WTC11 (cell line): ENCODE measurements at regions of chr6 and their contacts with region 1.

Region 1: GRCh38 chr6:138509371-138509770 is 10.1 kb upstream of the NHSL1 start:
- DNase-seq: peak; percentile 43
- ATAC-seq: peak; percentile 49
- H3K4me3 Mint-ChIP-seq: no peak overlapping the region
- H3K27ac Mint-ChIP-seq: no peak overlapping the region
- H3K4me1 Mint-ChIP-seq: peaks cover 53% of the 10 kb centered on the region
- H3K27me3 Mint-ChIP-seq: no peaks in the 10 kb centered on the region; the same call in 1 of the 2 replicates
- CTCF ChIP-seq: peak; percentile 64

Region 2: GRCh38 chr6:138428944-138429598 is 80.3 kb before region 1 on chr6:
- CTCF ChIA-PET with region 1: interaction called, 29 read pairs
- POLR2A ChIA-PET with region 1: no interaction called
- DNase-seq: no peak
- ATAC-seq: no peak
- H3K4me3 Mint-ChIP-seq: no peak overlapping the region
- H3K27ac Mint-ChIP-seq: peak overlapping the region; percentile 90; the same call in 1 of the 2 replicates
- H3K4me1 Mint-ChIP-seq: peaks cover 9% of the 10 kb centered on the region; the same call in 1 of the 2 replicates
- H3K27me3 Mint-ChIP-seq: no peaks in the 10 kb centered on the region
- CTCF ChIP-seq: no peak